Mammary epithelial cell (primary cell): ENCODE measurements at regions of chr18 and their contacts with region 1.

Region 1: GRCh38 chr18:62264984-62265383 is 60.1 kb upstream of the TNFRSF11A start:
- DNase-seq: no peak
- H3K4me3 ChIP-seq: no peak overlapping the region
- H3K27ac ChIP-seq: no peak overlapping the region
- H3K4me1 ChIP-seq: no peaks in the 10 kb centered on the region
- H3K27me3 ChIP-seq: no peaks in the 10 kb centered on the region
- CTCF ChIP-seq: no peak

Region 2: GRCh38 chr18:62170857-62171256 is 94.1 kb before region 1 on chr18:
- CTCF ChIA-PET with region 1: no interaction called
- dilution Hi-C with region 1: loop called (anchors 5 kb)
- in situ Hi-C with region 1: no loop called
- intact Hi-C with region 1: no loop called
- DNase-seq: no peak
- H3K4me3 ChIP-seq: no peak overlapping the region
- H3K27ac ChIP-seq: no peak overlapping the region
- H3K4me1 ChIP-seq: no peaks in the 10 kb centered on the region
- H3K27me3 ChIP-seq: no peaks in the 10 kb centered on the region
- CTCF ChIP-seq: no peak